ENCODE measurements at regions of chr9 and their contacts with region 1.

Region 1: DNA sequence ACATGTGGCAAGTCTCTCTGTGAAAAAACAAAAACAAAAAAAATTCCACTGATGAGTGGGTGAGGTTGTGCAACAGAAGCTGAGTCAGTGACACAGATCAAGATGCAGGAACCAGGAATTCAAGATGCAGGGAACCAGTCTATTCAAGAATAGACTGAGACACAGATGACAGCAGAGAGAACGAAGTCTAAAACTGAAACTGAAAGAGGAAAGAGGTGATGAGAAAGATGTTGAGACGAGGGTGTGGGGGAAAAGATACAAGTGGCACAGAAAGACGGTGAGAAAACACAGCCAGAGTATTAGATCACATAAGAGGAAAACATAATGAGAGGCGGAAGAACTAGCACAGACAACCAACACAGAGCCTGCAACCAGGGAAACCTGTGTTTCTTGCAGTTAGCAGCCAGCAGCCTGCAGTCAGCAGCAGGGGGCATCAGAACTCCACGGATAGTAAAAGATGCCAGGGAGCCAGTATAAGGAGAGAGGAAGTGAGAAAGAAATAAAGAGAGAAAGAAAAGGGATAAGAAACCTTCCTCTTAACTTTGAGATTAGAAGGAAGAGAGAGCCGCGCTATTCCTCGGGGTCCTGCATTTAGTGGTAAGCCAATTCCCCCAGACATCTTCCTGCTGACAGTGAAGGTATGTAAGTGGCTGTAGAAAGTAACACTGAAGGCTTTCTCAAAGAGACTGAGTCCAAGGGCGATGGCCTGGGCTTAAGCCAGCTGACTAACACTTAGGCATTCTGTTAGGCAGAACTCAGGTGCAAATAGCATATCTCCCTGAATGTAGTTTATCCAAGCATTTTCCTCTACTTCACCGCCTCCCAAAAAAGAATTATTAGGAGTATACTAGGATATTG is 79.0 kb downstream of the TLR4 start:
- DNase-seq: peak; percentile 34
- ATAC-seq: peak; percentile 60
- H3K4me3 Mint-ChIP-seq: no peak overlapping the region
- H3K27ac Mint-ChIP-seq: no peak overlapping the region
- H3K4me1 Mint-ChIP-seq: no peaks in the 10 kb centered on the region
- H3K27me3 Mint-ChIP-seq: no peaks in the 10 kb centered on the region
- CTCF ChIP-seq: peak; percentile 87

Region 2: GRCh38 chr9:117718085-117718484 is 65.1 kb before region 1 on chr9:
- CTCF ChIA-PET with region 1: no interaction called
- POLR2A ChIA-PET with region 1: no interaction called
- intact Hi-C with region 1: loop called (anchors 5 kb)
- DNase-seq: no peak
- ATAC-seq: peak; percentile 91
- H3K4me3 Mint-ChIP-seq: peak overlapping the region; percentile 46
- H3K27ac Mint-ChIP-seq: no peak overlapping the region
- H3K4me1 Mint-ChIP-seq: peaks cover 24% of the 10 kb centered on the region
- H3K27me3 Mint-ChIP-seq: peaks cover 9% of the 10 kb centered on the region
- CTCF ChIP-seq: no peak

Region 3: GRCh38 chr9:117825609-117826347 is 42.6 kb after region 1 on chr9:
- CTCF ChIA-PET with region 1: no interaction called
- POLR2A ChIA-PET with region 1: no interaction called
- intact Hi-C with region 1: loop called (anchors 1 kb)
- DNase-seq: peak; percentile 26
- ATAC-seq: peak; percentile 96
- H3K4me3 Mint-ChIP-seq: peak overlapping the region; percentile 53
- H3K27ac Mint-ChIP-seq: peak overlapping the region; percentile 22
- H3K4me1 Mint-ChIP-seq: peaks cover 32% of the 10 kb centered on the region
- H3K27me3 Mint-ChIP-seq: peaks cover 15% of the 10 kb centered on the region
- CTCF ChIP-seq: no peak

Region 4: GRCh38 chr9:117936185-117937130 is 153.3 kb after region 1 on chr9:
- CTCF ChIA-PET with region 1: no interaction called
- POLR2A ChIA-PET with region 1: no interaction called
- intact Hi-C with region 1: loop called (anchors 5 kb)
- DNase-seq: no peak
- ATAC-seq: peak; percentile 95
- H3K4me3 Mint-ChIP-seq: peak overlapping the region; percentile 11
- H3K27ac Mint-ChIP-seq: peak overlapping the region; percentile 28
- H3K4me1 Mint-ChIP-seq: peaks cover 24% of the 10 kb centered on the region
- H3K27me3 Mint-ChIP-seq: no peaks in the 10 kb centered on the region
- CTCF ChIP-seq: no peak